GM10248 (cell line): ENCODE measurements at regions of chrX and their contacts with region 1.

Region 1: DNA sequence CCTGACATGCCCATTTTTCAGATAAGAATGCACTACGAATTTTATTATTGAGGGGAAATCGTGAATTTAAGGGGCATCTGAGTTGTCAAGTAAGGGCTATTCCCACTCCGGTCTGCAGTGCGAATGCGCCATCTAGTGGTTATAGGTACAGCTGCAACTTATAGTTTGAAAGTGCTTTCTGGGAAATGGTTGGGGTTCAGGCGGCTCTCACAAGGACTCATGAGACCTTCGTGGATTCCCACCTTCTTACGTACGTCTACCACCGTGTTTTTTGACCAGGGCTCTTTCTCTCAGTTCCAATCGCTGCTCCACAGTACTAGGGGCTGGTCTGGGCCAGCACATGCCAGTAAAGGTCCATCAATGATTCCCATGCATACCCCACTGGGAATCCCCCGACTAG is 12.3 kb downstream of the MSL3 start:
- DNase-seq: peak; percentile 65
- CTCF ChIP-seq: peak; percentile 67

Region 2: GRCh38 chrX:11531226-11531625 is 239.1 kb before region 1 on chrX:
- CTCF ChIA-PET with region 1: interaction called, 21 read pairs
- POLR2A ChIA-PET with region 1: no interaction called
- DNase-seq: no peak
- CTCF ChIP-seq: no peak

Region 3: DNA sequence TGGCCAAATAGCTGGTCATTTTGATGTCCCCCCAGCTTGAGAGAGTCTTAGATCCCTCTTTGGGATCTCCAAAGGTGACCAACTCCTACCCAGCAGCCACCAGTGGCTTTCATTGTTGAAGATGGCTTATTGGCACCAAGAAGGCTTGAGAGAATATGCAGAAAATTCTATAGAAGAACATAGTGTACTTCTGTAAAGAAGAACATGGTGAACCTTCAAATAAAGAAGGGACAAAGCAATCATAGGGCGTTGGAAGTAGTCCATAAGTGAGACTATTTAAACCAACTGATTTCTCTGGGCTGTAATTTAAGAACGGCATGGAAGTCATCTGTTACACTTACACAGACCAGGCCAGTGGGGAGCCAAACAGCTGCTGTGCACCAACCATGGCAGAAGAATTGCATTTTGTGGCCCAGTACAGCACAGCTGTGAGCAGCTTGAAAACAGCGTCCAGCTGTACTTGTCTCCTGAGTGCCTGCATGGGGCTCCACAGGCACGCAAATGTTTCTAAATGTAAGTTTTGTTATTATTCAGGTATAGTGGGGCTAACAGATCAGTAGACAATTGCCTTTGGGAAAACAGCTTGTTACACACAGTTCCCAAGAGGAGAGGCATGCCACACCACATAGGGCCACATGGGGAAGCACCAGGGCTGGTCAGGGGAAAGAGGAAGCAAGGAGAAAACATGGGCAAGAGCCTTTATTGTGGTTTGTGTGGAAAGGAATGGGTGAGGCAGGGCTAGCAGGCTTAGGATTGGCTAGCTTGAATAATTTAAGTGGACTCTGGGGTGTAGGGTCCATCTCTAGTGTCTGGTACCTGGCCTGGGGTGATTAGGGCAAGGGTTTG is 229.6 kb before region 1 on chrX:
- CTCF ChIA-PET with region 1: interaction called, 15 read pairs
- POLR2A ChIA-PET with region 1: no interaction called
- DNase-seq: peak; percentile 10
- CTCF ChIP-seq: peak; percentile 14

Region 4: GRCh38 chrX:11781734-11782370 is 11.5 kb after region 1 on chrX:
- CTCF ChIA-PET with region 1: interaction called, 11 read pairs
- POLR2A ChIA-PET with region 1: no interaction called
- DNase-seq: no peak
- CTCF ChIP-seq: no peak